ENCODE measurements at regions of chr9 and their contacts with region 1.

Region 1: GRCh38 chr9:98056269-98057137 is at the start of gene NANS:
- DNase-seq: peak; percentile 91 to 96
- ATAC-seq: peak; percentile 96 to 98
- H3K4me3 ChIP-seq: peak within 1 kb of the TSS; percentile 70
- H3K27ac ChIP-seq: peak within 1 kb of the TSS; percentile 86 to 93
- H3K4me1 ChIP-seq: peaks cover 16% of the 10 kb centered on the region; the same call in 2 of the 3 replicates
- CTCF ChIP-seq: no peak
- EP300 ChIP-seq: no peak
- POLR2A ChIP-seq: peak; percentile 92
- RAD21 ChIP-seq: no peak
- polyA plus RNA-seq, gene NANS: 66.6 and 70.2 TPM in 2 replicates

Region 2: GRCh38 chr9:97982683-97983588 is 73.6 kb before region 1 on chr9 and contains the start of gene ANP32B:
- CTCF ChIA-PET with region 1: interaction called, 5 read pairs
- POLR2A ChIA-PET with region 1: interaction called, 13 read pairs
- DNase-seq: peak; percentile 72 to 90
- ATAC-seq: peak; percentile 73 to 93
- H3K4me3 ChIP-seq: peak within 1 kb of the TSS; percentile 86
- H3K27ac ChIP-seq: peak within 1 kb of the TSS; percentile 99
- H3K4me1 ChIP-seq: peaks cover 37% of the 10 kb centered on the region
- CTCF ChIP-seq: peak; percentile 70
- EP300 ChIP-seq: no peak
- POLR2A ChIP-seq: peak; percentile 58
- RAD21 ChIP-seq: 0 out of 5 replicates have a peak, but pooled peaks of 1 of the 2 experiments have one; percentile 18
- polyA plus RNA-seq, gene ANP32B: 97.0 and 127 TPM in 2 replicates

Region 3: GRCh38 chr9:98034593-98035546 is 21.6 kb before region 1 on chr9:
- CTCF ChIA-PET with region 1: interaction called, 15 read pairs
- POLR2A ChIA-PET with region 1: interaction called, 12 read pairs
- DNase-seq: peak; percentile 83 to 84
- ATAC-seq: peak; percentile 96 to 97
- H3K4me3 ChIP-seq: no peak overlapping the region
- H3K27ac ChIP-seq: no peak overlapping the region
- H3K4me1 ChIP-seq: no peaks in the 10 kb centered on the region
- CTCF ChIP-seq: peak; percentile 71
- EP300 ChIP-seq: no peak
- POLR2A ChIP-seq: no peak
- RAD21 ChIP-seq: peak; percentile 50 to 52; a peak in 4 of 5 replicates

Region 4: GRCh38 chr9:98045234-98046179 is 11.0 kb before region 1 on chr9:
- CTCF ChIA-PET with region 1: no interaction called
- POLR2A ChIA-PET with region 1: interaction called, 14 read pairs
- DNase-seq: peak in 1 of 2 experiments; percentile 47
- ATAC-seq: peak in 1 of 2 experiments; percentile 49; a peak in 2 of 6 replicates
- H3K4me3 ChIP-seq: no peak overlapping the region
- H3K27ac ChIP-seq: no peak overlapping the region
- H3K4me1 ChIP-seq: no peaks in the 10 kb centered on the region
- CTCF ChIP-seq: no peak
- EP300 ChIP-seq: no peak
- POLR2A ChIP-seq: no peak
- RAD21 ChIP-seq: no peak

Region 5: DNA sequence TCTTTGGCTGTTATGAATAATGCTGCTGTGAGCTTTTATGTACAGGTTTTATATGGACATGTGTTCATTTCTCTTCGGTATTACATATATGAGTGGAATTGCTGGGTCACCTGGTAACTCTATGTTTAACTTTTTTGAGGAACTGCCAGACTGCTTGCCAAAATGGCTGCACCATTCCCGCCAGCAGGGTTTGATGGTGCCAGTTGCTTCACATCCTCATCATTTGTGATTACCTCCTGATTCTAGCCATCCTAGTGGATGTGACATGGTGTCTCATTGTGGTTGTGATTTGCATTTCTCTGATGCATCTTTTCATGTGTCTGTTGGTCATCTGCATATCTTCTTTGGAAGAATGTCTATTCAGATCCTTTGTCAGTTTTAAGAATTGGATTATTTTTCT is 10.7 kb after region 1 on chr9:
- CTCF ChIA-PET with region 1: interaction called, 84 read pairs
- POLR2A ChIA-PET with region 1: interaction called, 13 read pairs
- DNase-seq: no peak
- ATAC-seq: no peak
- H3K4me3 ChIP-seq: no peak overlapping the region
- H3K27ac ChIP-seq: no peak overlapping the region
- H3K4me1 ChIP-seq: peaks cover 3% of the 10 kb centered on the region; the same call in 1 of the 3 replicates
- CTCF ChIP-seq: no peak
- EP300 ChIP-seq: no peak
- POLR2A ChIP-seq: no peak
- RAD21 ChIP-seq: no peak

Region 6: DNA sequence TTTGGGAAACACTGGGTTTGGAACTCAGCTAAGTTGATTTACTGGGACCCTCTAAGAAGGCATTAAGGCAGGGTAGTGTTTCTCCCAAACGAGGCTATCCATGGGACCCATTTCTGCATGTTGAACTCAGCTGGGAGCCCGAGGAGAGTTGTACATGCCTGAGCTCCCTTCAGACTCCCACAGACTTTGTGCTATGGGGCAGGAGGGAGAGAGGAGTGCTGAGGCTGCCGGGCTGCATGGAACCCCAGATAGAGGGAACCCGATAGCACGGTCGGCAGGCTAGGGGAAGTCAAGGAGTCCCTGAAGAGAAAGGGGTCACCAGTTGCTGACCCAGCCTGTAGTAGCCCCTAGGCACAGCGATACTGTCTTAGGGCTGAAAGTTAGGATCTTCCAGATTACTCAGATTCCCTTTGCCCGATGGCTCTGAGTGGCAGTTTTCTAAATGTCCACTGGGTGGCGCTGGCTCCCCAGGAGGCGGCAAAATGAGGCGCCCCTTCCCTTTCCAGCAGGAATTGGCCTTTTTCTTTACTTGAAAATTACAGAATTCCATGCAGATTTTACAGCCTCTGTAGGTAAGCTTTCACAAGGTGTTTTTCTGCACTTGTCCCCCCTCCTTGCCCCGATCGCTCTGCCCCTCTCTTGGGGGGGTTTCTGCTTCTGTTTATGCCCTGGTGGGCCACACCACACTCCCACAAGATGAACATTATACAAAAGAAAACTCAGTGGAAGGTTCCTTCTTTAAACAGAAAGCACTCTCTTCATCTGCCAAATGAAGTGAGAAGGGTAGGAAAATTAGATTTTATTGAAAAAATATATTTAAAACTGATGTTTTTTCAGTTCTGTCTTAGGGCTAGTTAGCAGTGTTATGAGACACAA is 17.9 kb after region 1 on chr9:
- CTCF ChIA-PET with region 1: interaction called, 84 read pairs
- POLR2A ChIA-PET with region 1: interaction called, 7 read pairs
- DNase-seq: peak; percentile 55 to 65
- ATAC-seq: peak; percentile 72 to 81
- H3K4me3 ChIP-seq: no peak overlapping the region
- H3K27ac ChIP-seq: peak overlapping the region; percentile 54 to 70; a peak in 5 of 6 replicates
- H3K4me1 ChIP-seq: peaks cover 28% of the 10 kb centered on the region
- CTCF ChIP-seq: peak; percentile 91
- EP300 ChIP-seq: no peak
- POLR2A ChIP-seq: no peak
- RAD21 ChIP-seq: peak; percentile 82 to 86

Region 7: DNA sequence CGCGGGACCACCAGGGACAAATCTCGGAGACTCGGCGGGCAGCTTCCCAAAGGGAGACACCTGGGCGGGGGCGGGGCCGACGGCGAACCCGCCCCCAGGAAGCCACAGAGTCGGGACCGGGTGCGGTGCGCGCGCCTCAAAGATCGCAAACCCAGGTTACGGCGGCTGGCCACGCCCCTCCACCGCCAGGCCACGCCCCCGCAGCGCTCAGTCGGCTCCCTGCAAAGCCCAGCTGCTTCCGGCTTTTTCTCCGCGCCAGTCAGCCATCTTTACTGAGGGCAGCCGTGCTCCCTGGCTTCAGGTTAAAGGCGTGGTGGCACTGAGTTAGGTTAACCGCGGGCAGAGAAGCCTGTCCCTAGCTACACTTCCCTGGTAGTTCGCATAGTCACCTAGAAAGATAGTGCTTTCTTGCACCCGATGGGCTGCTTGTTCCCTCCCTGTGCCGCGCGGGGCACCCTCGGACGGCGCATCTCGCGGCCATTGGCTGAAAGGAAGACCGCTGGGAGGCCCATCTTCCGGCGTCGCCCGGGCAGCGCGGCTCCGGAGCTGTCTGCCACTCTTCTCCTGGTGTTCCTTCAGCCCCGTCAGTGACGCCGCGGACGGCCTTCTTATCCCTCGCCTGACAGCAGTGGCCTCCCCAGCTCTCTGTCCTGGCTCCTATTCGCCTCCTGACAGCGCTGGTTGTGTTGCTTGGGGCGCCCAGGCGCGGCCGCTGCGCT is 199.2 kb after region 1 on chr9 and contains the start of gene TBC1D2:
- CTCF ChIA-PET with region 1: interaction called, 3 read pairs
- POLR2A ChIA-PET with region 1: interaction called, 13 read pairs
- DNase-seq: peak; percentile 92 to 94
- ATAC-seq: peak; percentile 85 to 94
- H3K4me3 ChIP-seq: peak within 1 kb of the TSS; percentile 79
- H3K27ac ChIP-seq: peak within 1 kb of the TSS; percentile 86 to 90
- H3K4me1 ChIP-seq: peaks cover 45% of the 10 kb centered on the region
- CTCF ChIP-seq: no peak
- EP300 ChIP-seq: no peak
- POLR2A ChIP-seq: peak; percentile 83
- RAD21 ChIP-seq: no peak
- polyA plus RNA-seq, gene TBC1D2: 3.3 and 4.1 TPM in 2 replicates